IMR-90 (cell line): ENCODE measurements at regions of chr7 and their contacts with region 1.

Region 1: GRCh38 chr7:29878081-29878688 is 71.9 kb downstream of the WIPF3 start:
- DNase-seq: peak; percentile 46
- ATAC-seq: peak; percentile 65; the same call in 1 of the 2 replicates
- H3K4me3 ChIP-seq: no peak overlapping the region
- H3K27ac ChIP-seq: no peak overlapping the region
- H3K4me1 ChIP-seq: no peaks in the 10 kb centered on the region
- H3K27me3 ChIP-seq: peaks cover 11% of the 10 kb centered on the region
- CTCF ChIP-seq: peak; percentile 69
- POLR2A ChIP-seq: no peak
- RAD21 ChIP-seq: peak; percentile 66

Region 2: DNA sequence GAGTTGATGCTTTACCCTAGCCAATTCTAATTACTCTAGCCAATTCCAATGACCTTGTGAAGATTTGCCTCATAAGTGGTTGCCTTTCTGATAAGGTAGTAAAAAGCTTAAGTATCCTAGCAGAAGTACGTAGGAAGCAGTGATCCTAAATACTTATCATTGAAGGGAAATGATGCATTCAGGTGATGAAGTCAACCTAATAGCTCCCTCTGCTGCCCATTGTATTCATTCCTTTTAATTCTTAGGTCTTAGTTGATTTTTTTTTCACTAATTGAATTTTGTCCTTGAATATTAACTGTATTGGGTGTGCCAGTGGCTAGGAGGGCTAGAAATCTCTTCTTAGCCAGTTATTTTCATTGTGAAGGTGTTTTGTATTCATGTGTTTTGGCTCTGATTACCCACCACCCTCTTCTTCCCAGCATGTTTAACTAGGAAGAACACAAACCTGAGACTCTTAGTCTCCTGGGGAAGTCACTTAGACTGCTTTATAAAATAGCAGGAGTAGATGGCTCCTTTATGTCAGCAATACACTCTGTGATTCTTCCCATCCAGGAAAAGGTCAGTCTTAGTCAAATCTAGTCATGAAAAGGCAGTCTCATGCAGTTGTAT is 196.3 kb after region 1 on chr7:
- CTCF ChIA-PET with region 1: no interaction called
- POLR2A ChIA-PET with region 1: no interaction called
- dilution Hi-C with region 1: no loop called
- in situ Hi-C with region 1: loop called (anchors 10 kb)
- intact Hi-C with region 1: loop called (anchors 1 kb)
- DNase-seq: peak; percentile 60
- ATAC-seq: 0 out of 2 replicates have a peak, but pooled peaks have one; percentile 21
- H3K4me3 ChIP-seq: no peak overlapping the region
- H3K27ac ChIP-seq: no peak overlapping the region
- H3K4me1 ChIP-seq: no peaks in the 10 kb centered on the region
- H3K27me3 ChIP-seq: no peaks in the 10 kb centered on the region
- CTCF ChIP-seq: peak; percentile 55
- POLR2A ChIP-seq: no peak
- RAD21 ChIP-seq: peak; percentile 56